Ovary (tissue), 10 donors: ENCODE measurements at regions of chr18 and their contacts with region 1.

Region 1: DNA sequence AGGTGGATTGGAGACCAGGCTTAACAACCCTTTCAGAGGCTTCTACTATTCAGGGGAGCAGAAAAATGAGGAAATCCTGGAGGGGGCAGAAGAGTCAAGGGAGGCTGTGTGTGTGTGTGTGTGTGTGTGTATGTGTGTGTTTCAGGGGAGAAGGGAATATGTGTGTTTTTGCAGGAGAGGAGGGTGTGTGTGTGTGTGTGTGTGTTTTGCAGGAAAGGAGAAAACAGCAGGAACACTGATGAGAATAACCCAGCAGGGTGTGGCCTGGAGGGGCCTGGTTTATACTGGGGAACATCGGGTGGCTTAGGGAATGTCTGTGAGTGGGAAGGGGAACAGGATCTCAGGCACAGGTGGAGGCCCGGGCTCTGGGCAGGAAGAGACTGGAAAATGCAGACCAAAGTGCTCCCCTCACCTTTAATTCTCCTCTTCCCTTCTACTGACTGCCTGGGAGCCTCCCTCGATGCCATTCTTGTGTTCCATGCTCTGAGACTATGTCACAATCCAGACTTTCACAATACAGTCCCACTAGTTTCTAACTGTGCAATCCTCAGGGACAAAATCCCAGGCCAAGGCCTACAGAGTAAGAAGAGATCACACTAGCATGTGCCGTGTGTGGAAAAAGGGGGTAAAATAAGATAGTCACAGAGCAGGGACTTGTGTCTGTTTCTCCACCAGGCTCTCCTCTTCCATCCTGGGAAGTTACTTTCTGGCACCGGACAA is 10.0 kb downstream of the CYB5A start:
- DNase-seq: no peak
- H3K4me3 ChIP-seq: no peak overlapping the region
- H3K27ac ChIP-seq: no peak overlapping the region
- H3K4me1 ChIP-seq: peaks cover 29% of the 10 kb centered on the region
- H3K27me3 ChIP-seq: no peaks in the 10 kb centered on the region
- CTCF ChIP-seq: no peak
- EP300 ChIP-seq: no peak
- POLR2A ChIP-seq: no peak

Region 2: DNA sequence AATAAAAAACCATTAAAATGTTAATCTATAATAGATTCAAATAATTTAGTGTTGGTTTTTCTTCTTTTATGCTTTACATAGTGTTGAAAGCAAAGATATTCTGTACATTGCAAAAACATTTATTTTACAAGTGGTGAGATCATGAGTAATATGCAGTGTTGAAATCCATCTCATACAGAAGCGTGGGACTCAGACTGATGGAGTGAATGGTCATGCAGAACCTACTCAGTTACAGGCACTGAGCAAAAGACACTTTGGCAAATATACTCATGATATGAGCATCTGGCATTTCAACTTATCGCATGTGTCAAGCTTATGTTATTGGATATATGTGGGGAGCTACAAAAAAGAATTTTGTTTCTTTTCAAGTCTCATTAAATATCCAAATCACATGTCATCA is 793.8 kb before region 1 on chr18:
- intact Hi-C with region 1: no loop called
- DNase-seq: no peak
- H3K4me3 ChIP-seq: no peak overlapping the region
- H3K27ac ChIP-seq: no peak overlapping the region
- H3K4me1 ChIP-seq: no peaks in the 10 kb centered on the region
- H3K27me3 ChIP-seq: no peaks in the 10 kb centered on the region
- CTCF ChIP-seq: no peak
- EP300 ChIP-seq: no peak
- POLR2A ChIP-seq: no peak

Region 3: GRCh38 chr18:73724958-73725357 is 556.8 kb before region 1 on chr18:
- intact Hi-C with region 1: no loop called
- DNase-seq: no peak
- H3K4me3 ChIP-seq: no peak overlapping the region
- H3K27ac ChIP-seq: no peak overlapping the region
- H3K4me1 ChIP-seq: no peaks in the 10 kb centered on the region
- H3K27me3 ChIP-seq: no peaks in the 10 kb centered on the region
- CTCF ChIP-seq: no peak
- EP300 ChIP-seq: no peak
- POLR2A ChIP-seq: no peak

Region 4: DNA sequence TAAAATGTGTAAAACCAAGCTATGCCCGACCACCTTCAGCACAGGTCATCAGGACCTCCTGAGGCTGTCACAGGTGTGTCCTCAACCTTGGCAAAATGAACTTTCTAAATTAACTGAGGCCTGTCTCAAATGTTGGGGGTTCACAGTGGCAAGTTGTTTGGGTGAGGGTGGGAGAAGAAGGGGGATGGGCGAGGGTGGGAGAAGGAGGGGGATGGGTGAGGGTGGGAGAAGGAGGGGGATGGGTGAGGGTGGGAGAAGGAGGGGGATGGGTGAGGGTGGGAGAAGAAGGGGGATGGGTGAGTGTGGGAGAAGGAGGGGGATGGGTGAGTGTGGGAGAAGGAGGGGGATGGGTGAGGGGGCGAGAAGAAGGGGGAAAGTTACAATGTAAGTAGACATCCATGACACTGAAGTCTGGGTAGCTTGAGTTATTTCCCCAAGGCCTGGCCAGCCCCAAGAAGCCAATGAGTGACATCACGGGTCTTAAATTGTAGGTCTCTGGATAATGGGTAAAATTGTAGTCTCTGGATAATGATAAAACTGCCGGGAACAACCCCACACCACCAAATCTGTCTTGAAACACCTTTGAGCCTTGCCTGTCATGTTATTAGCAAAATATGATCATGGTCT is 77.2 kb before region 1 on chr18:
- intact Hi-C with region 1: no loop called
- DNase-seq: peak in 2 of 5 donors; percentile 59 to 68
- H3K4me3 ChIP-seq: no peak overlapping the region
- H3K27ac ChIP-seq: peak overlapping the region in 1 of 2 donors; percentile 55
- H3K4me1 ChIP-seq: peaks cover 10% of the 10 kb centered on the region
- H3K27me3 ChIP-seq: no peaks in the 10 kb centered on the region
- CTCF ChIP-seq: no peak
- EP300 ChIP-seq: no peak
- POLR2A ChIP-seq: no peak

Region 5: GRCh38 chr18:74234326-74235171 is 47.2 kb before region 1 on chr18:
- intact Hi-C with region 1: loop called in 1 of 4 experiments (anchors 10 kb)
- DNase-seq: peak in 3 of 5 donors; percentile 61 to 79 (median 73)
- H3K4me3 ChIP-seq: no peak overlapping the region
- H3K27ac ChIP-seq: peak overlapping the region; percentile 61 to 95
- H3K4me1 ChIP-seq: peaks cover 23% of the 10 kb centered on the region
- H3K27me3 ChIP-seq: no peaks in the 10 kb centered on the region
- CTCF ChIP-seq: no peak
- EP300 ChIP-seq: peak; percentile 63
- POLR2A ChIP-seq: no peak